ENCODE measurements at regions of chr12 and their contacts with region 1.

Region 1: DNA sequence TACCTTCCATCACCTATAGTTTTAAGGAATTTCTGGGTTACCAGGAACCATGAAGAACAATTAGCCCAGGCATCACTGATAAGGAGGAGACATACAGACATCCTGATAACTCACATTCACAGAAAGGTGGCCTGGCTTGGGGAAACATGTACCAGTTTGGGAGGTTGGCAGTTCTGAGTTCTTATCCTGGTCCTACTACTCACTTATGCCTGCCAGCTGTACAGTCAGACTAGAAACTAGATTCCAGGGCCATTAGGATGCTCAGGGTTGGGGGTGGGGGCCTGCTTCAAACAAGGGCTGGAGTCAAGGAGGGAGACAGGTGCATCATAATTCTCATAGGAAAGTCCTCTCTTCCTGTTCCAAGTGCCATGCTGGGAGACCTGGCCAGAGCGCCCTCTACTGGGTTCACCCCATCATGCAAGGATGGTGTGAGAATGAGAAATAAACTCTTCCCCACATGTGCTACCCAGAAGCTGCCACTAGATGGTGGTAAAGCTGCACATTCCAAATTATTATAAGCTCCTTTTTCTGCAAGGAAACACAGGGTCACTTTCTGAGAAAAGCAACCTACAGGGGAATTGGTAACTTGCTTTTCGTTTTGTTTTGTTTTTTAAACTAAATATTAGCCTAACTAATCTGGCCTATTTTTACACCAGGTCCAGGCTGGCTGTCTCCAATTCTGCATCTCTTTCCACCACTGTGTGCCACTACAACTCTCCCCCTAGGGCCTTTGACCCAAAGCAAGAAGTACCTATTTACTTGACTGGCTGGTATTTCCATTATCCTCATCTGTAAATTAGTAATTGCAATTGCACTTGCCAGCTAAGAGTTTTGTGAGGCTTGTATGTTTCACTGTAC is 14.5 kb downstream of the OAS2 start:
- DNase-seq: peak; percentile 77
- H3K4me3 ChIP-seq: no peak overlapping the region
- H3K27ac ChIP-seq: no peak overlapping the region
- H3K4me1 ChIP-seq: no peaks in the 10 kb centered on the region
- H3K27me3 ChIP-seq: peaks cover 0 to under 1% of the 10 kb centered on the region in 2 experiments
- CTCF ChIP-seq: peak; percentile 92 to 99
- POLR2A ChIP-seq: no peak

Region 2: DNA sequence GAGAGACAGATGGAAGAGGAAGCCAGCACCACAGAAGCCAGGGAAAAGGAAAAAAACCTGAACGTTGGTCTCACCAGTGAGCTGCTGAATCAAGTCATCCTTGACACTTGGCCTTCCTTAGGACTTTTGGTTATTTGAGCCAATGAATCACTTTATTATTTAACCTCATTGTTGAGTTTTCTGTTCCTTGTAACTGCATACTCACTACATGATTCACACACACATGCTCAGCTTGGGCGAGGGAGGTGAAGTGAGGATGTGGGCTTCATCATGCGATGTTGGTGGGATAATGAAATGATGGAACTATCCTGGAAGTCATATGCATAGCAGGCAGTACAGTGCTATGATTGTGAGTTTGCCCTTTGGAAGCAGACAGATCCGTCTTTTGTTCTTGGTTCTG is 241.8 kb before region 1 on chr12:
- CTCF ChIA-PET with region 1: no interaction called
- POLR2A ChIA-PET with region 1: no interaction called
- dilution Hi-C with region 1: no loop called
- intact Hi-C with region 1: no loop called
- DNase-seq: no peak
- H3K4me3 ChIP-seq: no peak overlapping the region
- H3K27ac ChIP-seq: no peak overlapping the region
- H3K4me1 ChIP-seq: no peaks in the 10 kb centered on the region
- H3K27me3 ChIP-seq: no peaks in the 10 kb centered on the region
- CTCF ChIP-seq: no peak
- POLR2A ChIP-seq: no peak

Region 3: DNA sequence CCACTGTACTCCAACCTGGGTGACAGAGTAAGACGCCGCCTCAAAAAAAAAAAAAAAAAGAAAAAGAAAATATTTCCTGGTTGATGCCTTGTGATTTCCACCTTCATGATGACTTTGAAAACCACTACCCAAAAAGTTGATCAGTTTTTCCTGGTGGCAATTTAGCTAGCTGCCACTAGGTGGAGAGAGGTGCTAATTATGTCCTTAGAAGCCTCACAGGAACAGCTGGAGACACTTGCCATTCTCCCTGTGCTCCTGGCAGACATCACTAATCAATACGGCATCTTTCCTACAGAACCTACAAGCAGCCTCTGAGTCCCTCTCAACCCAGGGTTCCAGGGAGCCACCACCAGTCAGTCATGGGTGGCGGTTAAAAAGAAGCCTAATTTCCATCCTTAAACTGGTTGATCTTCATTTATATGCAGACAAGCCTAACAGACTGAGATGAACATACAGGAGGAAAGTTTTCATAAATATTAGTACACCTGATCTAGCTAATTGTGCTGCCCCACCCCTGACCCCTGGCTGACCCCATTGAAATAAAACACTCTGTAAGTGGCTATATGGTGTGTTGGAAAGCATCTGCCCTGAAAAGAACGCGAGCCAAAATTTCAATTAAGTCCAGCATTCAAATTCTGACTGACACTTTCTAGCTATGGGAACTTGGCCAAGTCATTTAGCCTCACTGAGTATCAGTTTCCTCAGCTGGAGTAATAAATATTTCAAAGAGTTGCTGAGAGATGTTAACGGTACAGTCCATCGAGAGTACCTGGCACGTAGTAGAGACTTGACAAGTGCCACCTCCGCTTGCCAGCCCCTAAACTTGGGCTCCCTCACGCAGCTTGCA is 92.2 kb before region 1 on chr12:
- CTCF ChIA-PET with region 1: interaction called, 88 read pairs
- POLR2A ChIA-PET with region 1: no interaction called
- dilution Hi-C with region 1: no loop called
- intact Hi-C with region 1: loop called (anchors 1 kb)
- DNase-seq: peak; percentile 58
- H3K4me3 ChIP-seq: no peak overlapping the region
- H3K27ac ChIP-seq: no peak overlapping the region
- H3K4me1 ChIP-seq: peaks cover 36% of the 10 kb centered on the region
- H3K27me3 ChIP-seq: peaks cover 0 to 8% of the 10 kb centered on the region in 2 experiments
- CTCF ChIP-seq: peak; percentile 70 to 71
- POLR2A ChIP-seq: no peak

Region 4: DNA sequence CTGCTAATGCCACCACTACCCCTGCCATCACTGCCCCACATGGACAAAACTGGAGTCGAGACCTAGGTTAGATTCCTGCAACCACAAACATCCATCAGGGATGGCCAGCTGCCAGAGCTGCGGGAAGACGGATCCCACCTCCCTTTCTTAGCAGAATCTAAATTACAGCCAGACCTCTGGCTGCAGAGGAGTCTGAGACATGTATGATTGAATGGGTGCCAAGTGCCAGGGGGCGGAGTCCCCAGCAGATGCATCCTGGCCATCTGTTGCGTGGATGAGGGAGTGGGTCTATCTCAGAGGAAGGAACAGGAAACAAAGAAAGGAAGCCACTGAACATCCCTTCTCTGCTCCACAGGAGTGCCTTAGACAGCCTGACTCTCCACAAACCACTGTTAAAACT is 21.5 kb before region 1 on chr12:
- CTCF ChIA-PET with region 1: interaction called, 16 read pairs
- POLR2A ChIA-PET with region 1: no interaction called
- dilution Hi-C with region 1: no loop called
- intact Hi-C with region 1: no loop called
- DNase-seq: peak; percentile 38
- H3K4me3 ChIP-seq: no peak overlapping the region
- H3K27ac ChIP-seq: no peak overlapping the region
- H3K4me1 ChIP-seq: peaks cover 9% of the 10 kb centered on the region
- H3K27me3 ChIP-seq: no peaks in the 10 kb centered on the region
- CTCF ChIP-seq: no peak
- POLR2A ChIP-seq: no peak

Region 5: DNA sequence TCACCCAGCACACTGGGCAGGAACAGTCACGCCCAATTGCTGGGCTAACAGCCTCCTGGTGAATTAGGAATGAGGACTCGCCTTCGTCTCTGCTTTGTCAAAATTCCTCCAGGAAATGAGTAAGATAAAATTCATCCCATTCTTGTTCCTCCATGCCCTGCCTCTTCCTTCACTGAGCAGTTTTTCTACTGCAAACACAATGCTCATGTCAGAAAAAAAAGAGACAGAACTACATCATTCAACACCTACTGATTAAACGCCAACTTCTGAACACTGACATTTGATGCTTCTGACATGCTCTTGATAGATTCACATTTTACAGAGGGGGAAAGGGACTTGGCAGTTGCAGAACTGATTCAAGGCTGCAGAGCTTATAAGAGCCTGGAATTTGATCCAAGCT is 26.3 kb after region 1 on chr12:
- CTCF ChIA-PET with region 1: interaction called, 58 read pairs
- POLR2A ChIA-PET with region 1: interaction called, 6 read pairs
- dilution Hi-C with region 1: no loop called
- intact Hi-C with region 1: no loop called
- DNase-seq: peak; percentile 75
- H3K4me3 ChIP-seq: peak overlapping the region in 1 of 3 experiments; percentile 50
- H3K27ac ChIP-seq: peak overlapping the region; percentile 63
- H3K4me1 ChIP-seq: peaks cover 21% of the 10 kb centered on the region
- H3K27me3 ChIP-seq: no peaks in the 10 kb centered on the region
- CTCF ChIP-seq: no peak
- POLR2A ChIP-seq: peak; percentile 28

Region 6: DNA sequence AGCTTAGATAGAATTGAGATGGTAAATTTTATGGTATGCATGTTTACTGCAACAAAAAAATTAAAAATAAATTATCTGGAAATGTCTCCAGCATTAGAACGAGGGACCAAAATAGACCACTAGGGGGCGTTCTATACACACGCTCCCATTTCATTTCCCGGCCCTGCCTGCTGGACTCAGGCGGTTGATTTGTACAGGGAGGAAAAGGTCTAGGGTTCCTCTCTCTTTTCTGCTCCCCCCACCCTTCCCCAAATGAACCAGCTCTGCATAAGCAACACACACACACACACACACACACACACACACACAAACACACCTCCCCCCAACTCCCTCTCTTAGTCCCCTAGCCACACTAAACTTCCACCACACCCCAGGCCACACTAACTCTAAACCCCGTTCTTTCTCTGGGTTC is 56.0 kb after region 1 on chr12:
- CTCF ChIA-PET with region 1: interaction called, 10 read pairs
- POLR2A ChIA-PET with region 1: no interaction called
- dilution Hi-C with region 1: no loop called
- intact Hi-C with region 1: loop called (anchors 1 kb)
- DNase-seq: peak; percentile 49
- H3K4me3 ChIP-seq: no peak overlapping the region
- H3K27ac ChIP-seq: no peak overlapping the region
- H3K4me1 ChIP-seq: no peaks in the 10 kb centered on the region
- H3K27me3 ChIP-seq: peaks cover 5 to 6% of the 10 kb centered on the region in 2 experiments
- CTCF ChIP-seq: peak; percentile 71 to 79
- POLR2A ChIP-seq: no peak

Region 7: GRCh38 chr12:113135178-113136127 is 142.7 kb after region 1 on chr12 and contains the start of gene RASAL1:
- CTCF ChIA-PET with region 1: interaction called, 10 read pairs
- POLR2A ChIA-PET with region 1: no interaction called
- dilution Hi-C with region 1: no loop called
- intact Hi-C with region 1: no loop called
- DNase-seq: no peak
- H3K4me3 ChIP-seq: no peak within 1 kb of the TSS
- H3K27ac ChIP-seq: no peak within 1 kb of the TSS
- H3K4me1 ChIP-seq: no peaks in the 10 kb centered on the region
- H3K27me3 ChIP-seq: no peaks in the 10 kb centered on the region
- CTCF ChIP-seq: peak in 1 of 2 donors; percentile 31
- POLR2A ChIP-seq: no peak
- total RNA-seq, gene RASAL1: not detected in 2 replicates

Region 8: DNA sequence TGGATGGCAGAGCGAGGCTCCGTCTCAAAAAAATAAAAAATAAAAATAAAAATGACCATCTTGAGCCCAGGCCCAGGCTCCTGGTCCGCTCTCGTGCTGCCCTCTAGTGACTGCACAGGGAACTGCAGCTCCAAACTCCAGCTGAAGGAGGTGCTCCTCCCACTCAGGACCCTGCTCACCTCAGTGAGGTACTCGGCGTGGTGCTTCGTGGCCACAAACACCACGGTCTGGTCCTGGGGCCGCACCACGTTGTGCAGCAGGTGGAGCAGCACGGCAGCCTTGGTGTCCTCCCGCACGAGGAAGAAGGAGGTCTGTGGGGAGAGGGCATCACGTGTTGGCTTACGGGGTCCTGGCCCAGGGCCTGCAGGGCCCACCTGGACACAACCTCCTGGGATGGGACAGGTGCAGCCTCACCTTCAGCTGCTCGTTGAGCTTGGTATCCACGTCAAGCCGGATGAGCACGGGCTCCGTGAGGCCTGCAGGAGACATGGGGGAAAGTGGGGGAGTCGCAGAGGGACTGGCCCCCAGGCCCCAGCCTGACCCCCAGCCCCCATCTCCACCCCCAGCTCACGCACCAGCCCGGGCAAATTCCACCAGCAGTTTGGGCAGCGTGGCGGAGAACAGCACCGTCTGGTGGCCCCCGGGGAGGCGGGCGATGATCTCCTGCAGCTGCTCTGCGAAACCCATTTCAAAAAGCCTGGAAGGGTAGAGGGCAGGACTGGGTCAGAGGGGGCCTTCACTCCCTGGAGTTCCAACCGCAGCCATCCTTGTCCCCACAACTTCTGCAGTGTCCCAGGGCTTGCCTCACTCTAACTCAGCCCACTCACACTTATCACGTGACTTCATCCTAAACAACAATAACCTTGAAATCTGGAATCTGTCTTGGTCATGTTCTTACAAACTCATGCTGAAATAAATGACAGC is 182.0 kb after region 1 on chr12:
- CTCF ChIA-PET with region 1: interaction called, 83 read pairs
- POLR2A ChIA-PET with region 1: no interaction called
- dilution Hi-C with region 1: no loop called
- intact Hi-C with region 1: loop called (anchors 1 kb)
- DNase-seq: peak; percentile 66
- H3K4me3 ChIP-seq: no peak overlapping the region
- H3K27ac ChIP-seq: no peak overlapping the region
- H3K4me1 ChIP-seq: no peaks in the 10 kb centered on the region
- H3K27me3 ChIP-seq: no peaks in the 10 kb centered on the region
- CTCF ChIP-seq: peak; percentile 95
- POLR2A ChIP-seq: no peak

Region 9: GRCh38 chr12:113373969-113374368 is 381.2 kb after region 1 on chr12:
- CTCF ChIA-PET with region 1: no interaction called
- POLR2A ChIA-PET with region 1: no interaction called
- dilution Hi-C with region 1: no loop called
- intact Hi-C with region 1: no loop called
- DNase-seq: no peak
- H3K4me3 ChIP-seq: no peak overlapping the region
- H3K27ac ChIP-seq: no peak overlapping the region
- H3K4me1 ChIP-seq: no peaks in the 10 kb centered on the region
- H3K27me3 ChIP-seq: no peaks in the 10 kb centered on the region
- CTCF ChIP-seq: no peak
- POLR2A ChIP-seq: no peak